ENCODE measurements at regions of chr10 and their contacts with region 1.

Region 1: GRCh38 chr10:101095542-101096213 is 33.9 kb downstream of the KAZALD1 start:
- DNase-seq: no peak
- H3K4me3 ChIP-seq: no peak overlapping the region
- H3K27me3 ChIP-seq: peaks cover 26% of the 10 kb centered on the region
- CTCF ChIP-seq: peak; percentile 89

Region 2: GRCh38 chr10:101080933-101081931 is 14.4 kb before region 1 on chr10:
- CTCF ChIA-PET with region 1: interaction called, 70 read pairs
- POLR2A ChIA-PET with region 1: no interaction called
- DNase-seq: no peak
- H3K4me3 ChIP-seq: no peak overlapping the region
- H3K27me3 ChIP-seq: peaks cover 19% of the 10 kb centered on the region
- CTCF ChIP-seq: no peak

Region 3: DNA sequence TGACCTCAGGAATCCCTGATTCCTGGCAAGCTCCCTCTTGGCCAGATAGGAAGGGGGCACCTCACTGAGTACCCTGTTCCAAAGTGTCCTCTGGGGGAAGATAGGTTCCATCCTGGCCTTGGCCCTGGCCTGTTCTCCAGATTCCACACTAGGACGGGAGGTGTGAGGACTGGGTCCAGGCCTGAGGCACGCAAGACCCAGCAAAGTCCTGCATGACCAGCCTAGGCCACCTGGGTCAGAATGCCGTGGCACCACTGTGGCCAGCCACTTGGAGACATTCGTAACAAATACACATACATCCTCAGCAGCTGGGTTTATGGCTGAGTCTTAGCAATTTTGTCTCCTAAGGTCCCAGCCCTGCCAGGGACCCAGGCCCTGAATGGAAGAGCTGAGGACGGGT is 12.1 kb after region 1 on chr10:
- CTCF ChIA-PET with region 1: interaction called, 21 read pairs
- POLR2A ChIA-PET with region 1: no interaction called
- DNase-seq: no peak
- H3K4me3 ChIP-seq: no peak overlapping the region
- H3K27me3 ChIP-seq: peaks cover 18% of the 10 kb centered on the region
- CTCF ChIP-seq: no peak

Region 4: DNA sequence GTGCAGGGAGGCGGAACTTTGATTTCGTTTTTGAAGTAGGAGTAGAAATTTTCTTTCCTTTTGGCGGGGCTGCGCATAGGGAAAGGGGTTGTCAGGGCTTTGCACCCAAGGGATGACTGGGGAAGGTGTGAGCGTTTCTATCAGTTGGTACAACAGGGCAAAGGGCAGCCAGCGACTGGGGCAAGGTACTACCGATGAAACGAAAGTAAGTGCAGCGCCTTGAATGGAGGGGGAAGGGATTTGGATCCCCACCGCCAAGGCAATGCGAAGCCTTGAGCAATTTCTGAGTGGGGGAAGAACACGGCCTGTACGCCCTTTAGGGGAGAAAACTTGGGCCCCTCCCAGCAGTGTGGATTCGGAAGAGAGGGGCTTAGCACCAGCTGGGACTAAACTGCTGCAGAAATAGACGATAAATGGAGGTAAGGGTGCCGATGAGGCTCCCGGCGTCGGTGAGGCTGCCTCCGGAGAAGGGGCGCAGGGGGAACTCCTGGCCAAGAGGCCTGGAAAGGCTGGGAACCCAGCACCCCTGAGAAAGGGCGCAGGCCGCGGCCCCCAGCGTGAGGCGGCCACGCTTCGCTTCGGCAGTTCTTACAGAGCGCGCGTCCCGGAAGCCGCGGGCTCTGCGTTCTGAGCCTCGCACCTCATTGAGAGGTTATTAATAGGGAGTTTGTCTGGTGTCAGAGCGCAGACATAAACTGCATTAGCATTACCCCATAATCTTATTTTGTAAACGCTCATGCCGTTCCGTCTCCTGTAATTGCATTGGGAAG is 25.4 kb after region 1 on chr10:
- CTCF ChIA-PET with region 1: interaction called, 17 read pairs
- POLR2A ChIA-PET with region 1: no interaction called
- DNase-seq: no peak
- H3K4me3 ChIP-seq: peak overlapping the region; percentile 16
- H3K27me3 ChIP-seq: peaks cover 60% of the 10 kb centered on the region
- CTCF ChIP-seq: no peak

Region 5: GRCh38 chr10:101587725-101588653 is 492.3 kb after region 1 on chr10 and contains the starts of genes DPCD and POLL:
- CTCF ChIA-PET with region 1: no interaction called
- POLR2A ChIA-PET with region 1: interaction called, 17 read pairs
- DNase-seq: peak; percentile 63
- H3K4me3 ChIP-seq: peak within 1 kb of the TSS; percentile 92
- H3K27me3 ChIP-seq: no peaks in the 10 kb centered on the region
- CTCF ChIP-seq: no peak
- polyA plus RNA-seq, gene DPCD: 46.4 and 51.9 TPM in 2 replicates
- polyA plus RNA-seq, gene POLL: 18.8 and 31.3 TPM in 2 replicates

Measured in BJ (cell line).